IMR-90 (cell line): ENCODE measurements at regions of chr4 and their contacts with region 1.

Region 1: GRCh38 chr4:80989921-80990544 is 40.5 kb upstream of the BMP3 start:
- DNase-seq: peak; percentile 73
- ATAC-seq: peak; percentile 66
- H3K4me3 ChIP-seq: no peak overlapping the region
- H3K27ac ChIP-seq: no peak overlapping the region
- H3K4me1 ChIP-seq: no peaks in the 10 kb centered on the region
- H3K27me3 ChIP-seq: peaks cover 5% of the 10 kb centered on the region
- CTCF ChIP-seq: peak; percentile 68
- POLR2A ChIP-seq: no peak
- RAD21 ChIP-seq: peak; percentile 63

Region 2: DNA sequence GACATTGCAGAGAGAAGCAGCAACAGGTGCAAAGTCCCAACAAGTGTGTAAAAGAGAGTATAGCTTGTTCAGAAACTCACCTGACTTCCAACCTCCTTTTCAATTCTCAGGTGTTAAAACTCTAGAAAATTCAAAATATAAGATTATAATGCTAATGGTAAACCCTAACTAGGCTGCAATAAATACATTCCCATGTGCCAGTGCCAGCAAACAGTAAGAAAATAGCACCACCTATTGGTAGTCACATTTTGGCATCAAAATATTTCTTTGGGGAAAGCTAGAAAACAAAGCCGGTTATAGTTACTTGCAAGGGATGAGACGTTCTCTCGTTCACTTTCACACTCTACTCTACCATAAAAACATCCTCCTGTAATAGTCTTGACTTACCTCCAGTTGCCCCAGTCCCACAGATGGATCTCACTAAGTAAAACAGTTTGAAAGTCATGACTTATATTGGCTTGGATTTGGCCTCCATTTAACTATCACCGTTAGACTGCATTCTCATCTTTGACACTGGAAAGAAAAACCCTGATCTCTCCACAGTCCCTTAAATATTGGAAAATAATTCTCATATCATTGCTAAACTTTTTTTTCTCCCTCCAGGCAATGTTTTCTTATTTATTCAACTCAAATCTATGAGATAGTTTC is 50.1 kb after region 1 on chr4:
- CTCF ChIA-PET with region 1: interaction called, 3 read pairs
- POLR2A ChIA-PET with region 1: no interaction called
- dilution Hi-C with region 1: no loop called
- in situ Hi-C with region 1: no loop called
- intact Hi-C with region 1: loop called (anchors 2 kb)
- DNase-seq: peak; percentile 35
- ATAC-seq: peak; percentile 71
- H3K4me3 ChIP-seq: no peak overlapping the region
- H3K27ac ChIP-seq: no peak overlapping the region
- H3K4me1 ChIP-seq: peaks cover 2% of the 10 kb centered on the region; the same call in 1 of the 2 replicates
- H3K27me3 ChIP-seq: peaks cover 1% of the 10 kb centered on the region; the same call in 1 of the 2 replicates
- CTCF ChIP-seq: peak; percentile 81
- POLR2A ChIP-seq: no peak
- RAD21 ChIP-seq: peak; percentile 79